ENCODE measurements at regions of chr15 and their contacts with region 1.

Region 1: GRCh38 chr15:37880009-37880834 is 54.2 kb upstream of the TMCO5A start:
- DNase-seq: no peak
- H3K4me3 Mint-ChIP-seq: no peak overlapping the region
- H3K27ac Mint-ChIP-seq: no peak overlapping the region
- H3K4me1 Mint-ChIP-seq: no peaks in the 10 kb centered on the region
- H3K27me3 Mint-ChIP-seq: peaks cover 6% of the 10 kb centered on the region

Region 2: DNA sequence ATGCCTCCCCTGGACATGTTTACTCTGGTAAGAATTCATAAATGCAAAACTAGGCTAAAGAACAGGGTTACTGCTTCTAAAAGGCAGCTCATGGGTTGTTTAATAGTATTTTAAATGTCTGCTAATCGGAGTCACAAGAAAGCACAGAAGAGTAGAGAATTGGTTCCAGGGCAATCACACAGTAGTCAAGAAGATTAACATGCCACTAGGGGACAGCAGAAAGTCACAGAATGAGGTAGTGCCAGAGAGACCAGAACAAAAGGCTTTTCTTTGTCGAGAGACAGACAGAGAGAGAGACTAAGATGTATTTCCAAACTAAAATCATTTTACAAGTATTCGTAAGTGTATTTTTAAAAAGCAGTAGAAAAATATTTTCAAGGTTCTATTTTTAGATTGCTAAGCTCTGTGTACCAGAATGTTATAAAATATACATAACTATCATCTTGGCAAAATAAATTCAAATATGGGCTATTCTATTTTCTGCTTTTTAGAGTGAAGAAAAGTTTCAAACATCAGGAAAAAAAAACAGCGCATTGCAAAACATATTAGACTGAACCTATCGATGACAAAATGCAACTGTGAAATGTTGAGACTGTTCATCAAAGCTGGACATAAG is 1379.1 kb before region 1 on chr15:
- CTCF ChIA-PET with region 1: no interaction called
- POLR2A ChIA-PET with region 1: no interaction called
- intact Hi-C with region 1: loop called (anchors 5 kb)
- DNase-seq: no peak
- H3K4me3 Mint-ChIP-seq: no peak overlapping the region
- H3K27ac Mint-ChIP-seq: no peak overlapping the region
- H3K4me1 Mint-ChIP-seq: no peaks in the 10 kb centered on the region
- H3K27me3 Mint-ChIP-seq: peaks cover 10% of the 10 kb centered on the region